ENCODE measurements at regions of chr20 and their contacts with region 1.

Region 1: DNA sequence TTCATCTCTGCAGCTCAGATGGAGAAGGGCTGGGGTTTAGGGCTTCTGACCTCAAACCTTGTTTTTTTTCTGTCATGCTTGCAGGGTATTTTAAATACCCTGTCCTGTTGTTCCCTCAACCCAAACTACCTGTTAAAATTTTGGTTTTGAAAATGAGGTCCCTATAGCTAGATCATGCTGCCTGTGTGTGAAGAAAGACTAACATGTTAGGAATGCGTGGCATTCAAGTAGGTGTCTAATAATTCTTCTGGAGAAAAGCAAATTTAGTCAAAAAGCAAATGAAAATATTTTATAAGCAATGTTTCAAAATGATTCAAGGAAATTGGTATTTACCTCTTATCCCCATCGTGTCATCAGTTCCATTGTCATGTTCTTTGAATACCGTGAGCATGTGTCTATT is 77.2 kb upstream of the C20orf144 start:
- DNase-seq: no peak
- H3K4me3 ChIP-seq: no peak overlapping the region
- H3K27ac ChIP-seq: no peak overlapping the region
- H3K4me1 ChIP-seq: no peaks in the 10 kb centered on the region
- H3K27me3 ChIP-seq: no peaks in the 10 kb centered on the region
- CTCF ChIP-seq: no peak

Region 2: GRCh38 chr20:33370296-33370695 is 214.7 kb before region 1 on chr20:
- intact Hi-C with region 1: no loop called
- DNase-seq: peak; percentile 27
- H3K4me3 ChIP-seq: no peak overlapping the region
- H3K27ac ChIP-seq: no peak overlapping the region
- H3K4me1 ChIP-seq: no peaks in the 10 kb centered on the region
- H3K27me3 ChIP-seq: no peaks in the 10 kb centered on the region
- CTCF ChIP-seq: no peak

Region 3: GRCh38 chr20:33489495-33490022 is 95.4 kb before region 1 on chr20:
- intact Hi-C with region 1: loop called (anchors 10 kb)
- DNase-seq: peak; percentile 100
- H3K4me3 ChIP-seq: peak overlapping the region; percentile 32
- H3K27ac ChIP-seq: peak overlapping the region; percentile 88
- H3K4me1 ChIP-seq: no peaks in the 10 kb centered on the region
- H3K27me3 ChIP-seq: no peaks in the 10 kb centered on the region
- CTCF ChIP-seq: no peak